Activated CD4-positive, alpha-beta memory T cell treated with anti-CD3 and anti-CD28 coated beads for 36 hours (primary cell): ENCODE measurements at regions of chr16 and their contacts with region 1.

Region 1: GRCh38 chr16:85821441-85822135 is 22.1 kb downstream of the COX4I1 start:
- DNase-seq: peak; percentile 86
- H3K4me3 Mint-ChIP-seq: no peak overlapping the region
- H3K27ac Mint-ChIP-seq: no peak overlapping the region
- H3K4me1 Mint-ChIP-seq: peaks cover 5% of the 10 kb centered on the region
- H3K27me3 Mint-ChIP-seq: peaks cover 4% of the 10 kb centered on the region

Region 2: GRCh38 chr16:85746008-85746781 is 75.4 kb before region 1 on chr16:
- CTCF ChIA-PET with region 1: no interaction called
- POLR2A ChIA-PET with region 1: no interaction called
- intact Hi-C with region 1: no loop called
- DNase-seq: no peak
- H3K4me3 Mint-ChIP-seq: no peak overlapping the region
- H3K27ac Mint-ChIP-seq: no peak overlapping the region
- H3K4me1 Mint-ChIP-seq: peaks cover 4% of the 10 kb centered on the region
- H3K27me3 Mint-ChIP-seq: peaks cover 12% of the 10 kb centered on the region

Region 3: DNA sequence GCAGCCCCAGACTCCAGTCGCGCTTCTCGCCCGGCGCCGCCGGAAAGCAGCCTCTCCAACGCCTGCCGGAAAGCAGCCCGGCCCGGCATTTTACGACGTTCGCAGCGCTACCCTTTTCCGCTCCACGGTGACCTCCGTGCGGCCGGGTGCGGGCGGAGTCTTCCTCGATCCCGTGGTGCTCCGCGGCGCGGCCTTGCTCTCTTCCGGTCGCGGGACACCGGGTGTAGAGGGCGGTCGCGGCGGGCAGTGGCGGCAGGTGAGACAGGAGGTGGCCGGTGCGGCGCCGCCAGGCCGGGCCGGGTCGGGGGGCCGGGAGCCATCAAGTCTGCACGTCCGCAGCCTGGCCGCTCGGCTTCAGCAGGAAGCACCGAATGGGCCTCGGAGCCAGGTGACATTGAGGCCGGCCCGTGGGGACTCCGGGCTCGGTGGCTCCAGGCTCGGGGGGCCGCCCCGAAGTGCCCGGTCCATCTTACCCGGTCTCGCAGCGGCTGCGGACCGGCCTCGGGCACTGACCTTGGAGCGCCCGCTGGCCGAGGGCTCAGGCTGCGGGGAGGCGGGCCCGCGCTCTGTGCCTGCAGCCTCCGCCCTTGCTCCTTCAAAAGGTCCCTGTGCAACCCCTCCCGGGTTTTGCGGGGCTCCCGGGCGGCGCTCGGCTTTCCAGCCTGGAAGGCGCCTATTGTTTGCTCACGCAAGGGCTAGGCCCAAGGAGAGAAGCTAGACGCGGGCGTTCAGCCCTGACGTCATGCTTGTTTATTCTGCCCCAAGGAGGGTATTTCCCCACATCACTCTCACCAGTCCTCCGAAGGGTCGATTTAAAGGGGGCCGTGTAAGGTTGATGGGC is 21.9 kb before region 1 on chr16 and contains the starts of genes COX4I1 and EMC8:
- CTCF ChIA-PET with region 1: interaction called, 11 read pairs
- POLR2A ChIA-PET with region 1: no interaction called
- intact Hi-C with region 1: no loop called
- DNase-seq: peak; percentile 96
- H3K4me3 Mint-ChIP-seq: peak within 1 kb of the TSS; percentile 86
- H3K27ac Mint-ChIP-seq: peak within 1 kb of the TSS; percentile 85
- H3K4me1 Mint-ChIP-seq: peaks cover 57% of the 10 kb centered on the region
- H3K27me3 Mint-ChIP-seq: no peaks in the 10 kb centered on the region
- total RNA-seq, gene COX4I1: 493 to 511 TPM
- total RNA-seq, gene EMC8: 27.5 to 27.9 TPM

Region 4: GRCh38 chr16:85947230-85948137 is 125.9 kb after region 1 on chr16:
- CTCF ChIA-PET with region 1: interaction called, 10 read pairs
- POLR2A ChIA-PET with region 1: no interaction called
- intact Hi-C with region 1: no loop called
- DNase-seq: peak; percentile 77
- H3K4me3 Mint-ChIP-seq: peak overlapping the region; percentile 45
- H3K27ac Mint-ChIP-seq: peak overlapping the region; percentile 54
- H3K4me1 Mint-ChIP-seq: peaks cover 49% of the 10 kb centered on the region
- H3K27me3 Mint-ChIP-seq: peaks cover 32% of the 10 kb centered on the region

Region 5: GRCh38 chr16:85995541-85996423 is 174.2 kb after region 1 on chr16:
- CTCF ChIA-PET with region 1: interaction called, 281 read pairs
- POLR2A ChIA-PET with region 1: no interaction called
- intact Hi-C with region 1: no loop called
- DNase-seq: peak; percentile 52
- H3K4me3 Mint-ChIP-seq: no peak overlapping the region
- H3K27ac Mint-ChIP-seq: no peak overlapping the region
- H3K4me1 Mint-ChIP-seq: peaks cover 32% of the 10 kb centered on the region
- H3K27me3 Mint-ChIP-seq: peaks cover 3% of the 10 kb centered on the region

Region 6: DNA sequence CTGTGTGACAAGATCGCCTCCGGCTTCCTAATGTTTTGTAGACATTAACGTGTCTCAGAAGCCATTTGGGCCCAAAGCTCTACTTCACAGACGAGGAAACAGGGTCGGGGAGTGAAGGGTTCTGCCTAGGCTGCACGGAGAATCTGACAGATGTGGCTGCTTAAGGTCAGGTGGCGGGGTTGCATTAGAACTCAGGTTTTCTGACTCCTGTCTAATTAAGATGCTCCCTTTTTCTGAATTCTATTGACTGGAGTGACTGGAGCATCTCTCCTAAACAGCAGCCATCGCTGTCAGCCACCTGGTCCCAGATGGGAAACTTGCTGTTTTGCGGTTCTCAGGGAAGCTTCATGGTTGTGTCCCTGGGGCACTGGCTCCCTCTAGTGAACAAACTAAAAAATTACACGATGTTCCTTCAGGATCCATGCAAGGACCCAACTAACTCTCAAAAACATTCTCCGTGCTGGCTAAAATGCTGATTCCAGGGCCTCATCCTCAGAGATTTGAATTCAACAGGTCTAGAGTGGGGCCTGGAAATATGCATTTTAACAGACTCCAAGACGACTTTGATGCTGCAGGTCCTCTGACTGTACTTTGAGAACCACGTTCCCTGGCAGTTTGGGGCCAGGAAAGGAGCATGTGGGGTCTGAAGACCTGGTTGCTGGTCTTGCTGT is 194.7 kb after region 1 on chr16:
- CTCF ChIA-PET with region 1: interaction called, 190 read pairs
- POLR2A ChIA-PET with region 1: no interaction called
- intact Hi-C with region 1: loop called (anchors 1 kb)
- DNase-seq: peak; percentile 47
- H3K4me3 Mint-ChIP-seq: no peak overlapping the region
- H3K27ac Mint-ChIP-seq: no peak overlapping the region
- H3K4me1 Mint-ChIP-seq: no peaks in the 10 kb centered on the region
- H3K27me3 Mint-ChIP-seq: peaks cover 34% of the 10 kb centered on the region

Region 7: GRCh38 chr16:86519649-86520316 is 698.2 kb after region 1 on chr16:
- CTCF ChIA-PET with region 1: interaction called, 6 read pairs
- POLR2A ChIA-PET with region 1: no interaction called
- intact Hi-C with region 1: loop called (anchors 5 kb)
- DNase-seq: peak; percentile 67
- H3K4me3 Mint-ChIP-seq: no peak overlapping the region
- H3K27ac Mint-ChIP-seq: no peak overlapping the region
- H3K4me1 Mint-ChIP-seq: peaks cover 3% of the 10 kb centered on the region
- H3K27me3 Mint-ChIP-seq: peaks cover 44% of the 10 kb centered on the region